Right lobe of liver (tissue), 6 donors: ENCODE measurements at regions of chr11 and their contacts with region 1.

Region 1: DNA sequence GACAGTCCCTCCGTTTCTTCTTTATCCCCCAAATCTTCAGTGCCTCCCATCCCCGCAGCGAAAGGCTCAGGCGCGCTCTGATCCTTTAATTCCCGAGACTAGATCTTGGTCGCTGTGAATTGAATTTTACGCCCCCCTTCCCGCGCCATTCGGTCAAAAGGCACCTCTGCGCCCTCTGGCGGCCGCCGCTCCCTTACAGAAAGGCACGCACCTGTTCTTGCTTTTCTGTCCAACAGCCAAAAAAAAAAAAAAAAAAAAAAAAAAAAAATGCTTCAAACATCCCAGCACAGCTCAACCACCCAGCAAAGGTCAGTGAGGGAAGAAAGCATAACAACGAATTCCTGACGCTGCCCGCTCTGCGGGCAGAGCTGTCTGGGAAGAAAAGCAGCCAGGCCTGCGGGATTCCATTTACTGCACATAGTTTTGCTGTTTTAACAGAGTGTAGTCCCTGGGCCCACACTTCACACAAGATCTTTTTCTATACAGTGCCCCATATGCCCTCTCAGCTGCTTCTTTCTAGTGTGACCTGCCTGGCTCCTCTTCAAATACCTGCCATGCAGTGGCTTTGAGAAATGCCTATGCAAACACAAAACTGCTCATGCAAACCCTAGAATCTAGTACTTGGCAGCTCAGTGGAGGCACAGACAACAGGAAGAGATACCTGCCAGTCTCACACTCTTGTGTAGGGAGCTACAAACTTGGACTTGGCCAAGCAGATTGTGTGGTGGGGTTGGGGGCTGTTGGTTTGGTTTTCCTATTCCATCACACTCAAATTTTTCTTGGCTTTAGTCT is 1.3 kb upstream of the ESAM start:
- DNase-seq: peak; percentile 82 to 88 (median 85)
- ATAC-seq: peak; percentile 46 to 68 (median 55)
- H3K4me3 ChIP-seq: peak overlapping the region; percentile 53 to 55 (median 54)
- H3K27ac ChIP-seq: peak overlapping the region in 2 of 3 donors; percentile 29 to 53
- H3K4me1 ChIP-seq: peaks cover 0 to 26% (median 5%) of the 10 kb centered on the region in 4 donors
- H3K27me3 ChIP-seq: peaks cover 0 to 25% of the 10 kb centered on the region in 2 donors
- CTCF ChIP-seq: peak; percentile 67 to 73 (median 70)
- POLR2A ChIP-seq: no peak

Region 2: GRCh38 chr11:124673333-124674167 is 89.8 kb before region 1 on chr11 and contains the starts of genes SIAE and SPA17:
- intact Hi-C with region 1: loop called (anchors 5 kb)
- DNase-seq: peak; percentile 95 to 96 (median 95)
- ATAC-seq: peak; percentile 98 to 99 (median 99)
- H3K4me3 ChIP-seq: peak within 1 kb of the TSS; percentile 61 to 82 (median 81)
- H3K27ac ChIP-seq: peak within 1 kb of the TSS; percentile 51 to 70 (median 55)
- H3K4me1 ChIP-seq: peaks cover 0 to 8% (median 0%) of the 10 kb centered on the region in 4 donors
- H3K27me3 ChIP-seq: no peaks in the 10 kb centered on the region
- CTCF ChIP-seq: no peak
- POLR2A ChIP-seq: peak; percentile 72
- total RNA-seq, gene SIAE: 30.9 to 56.8 (median 35.6) TPM
- total RNA-seq, gene SPA17: 0.23 to 4.0 (median 1.2) TPM